T-cell (primary cell): ENCODE measurements at regions of chr2 and their contacts with region 1.

Region 1: GRCh38 chr2:104434966-104435365 is 418.9 kb upstream of the POU3F3 start:
- DNase-seq: no peak
- ATAC-seq: no peak
- H3K4me3 ChIP-seq: no peak overlapping the region
- H3K4me3 Mint-ChIP-seq: peak overlapping the region in 2 of 3 donors; percentile 36 to 71
- H3K27ac ChIP-seq: no peak overlapping the region
- H3K27ac Mint-ChIP-seq: no peak overlapping the region
- H3K4me1 ChIP-seq: no peaks in the 10 kb centered on the region
- H3K4me1 Mint-ChIP-seq: peaks cover 7% of the 10 kb centered on the region in 3 donors
- H3K27me3 ChIP-seq: no peaks in the 10 kb centered on the region
- H3K27me3 Mint-ChIP-seq: peaks cover 3 to 4% of the 10 kb centered on the region in 2 donors

Region 2: DNA sequence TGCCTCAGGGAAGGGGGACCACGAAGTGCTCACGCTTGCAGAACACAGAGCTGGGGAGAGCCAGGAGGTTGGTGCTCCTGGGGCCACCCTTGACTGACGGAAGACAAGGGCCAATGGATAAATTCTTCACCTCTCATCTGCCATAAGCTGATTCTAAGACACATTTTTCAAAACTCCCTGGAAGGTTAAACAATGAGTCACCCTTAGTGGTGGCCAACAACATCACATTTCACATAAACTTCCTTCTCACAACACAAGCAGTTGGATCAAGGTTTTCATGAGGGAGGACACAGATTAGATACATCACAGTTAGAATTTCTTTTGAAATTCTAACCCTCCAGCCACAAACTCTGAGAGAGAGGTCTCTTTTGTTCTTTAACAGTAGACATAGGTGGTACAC is 294.6 kb before region 1 on chr2:
- CTCF ChIA-PET with region 1: interaction called in 1 of 2 experiments, 12 read pairs
- POLR2A ChIA-PET with region 1: no interaction called
- DNase-seq: no peak
- ATAC-seq: no peak
- H3K4me3 ChIP-seq: no peak overlapping the region
- H3K4me3 Mint-ChIP-seq: no peak overlapping the region
- H3K27ac ChIP-seq: no peak overlapping the region
- H3K27ac Mint-ChIP-seq: no peak overlapping the region
- H3K4me1 ChIP-seq: no peaks in the 10 kb centered on the region
- H3K4me1 Mint-ChIP-seq: no peaks in the 10 kb centered on the region
- H3K27me3 ChIP-seq: no peaks in the 10 kb centered on the region
- H3K27me3 Mint-ChIP-seq: peaks cover 0 to 6% of the 10 kb centered on the region in 2 donors

Region 3: DNA sequence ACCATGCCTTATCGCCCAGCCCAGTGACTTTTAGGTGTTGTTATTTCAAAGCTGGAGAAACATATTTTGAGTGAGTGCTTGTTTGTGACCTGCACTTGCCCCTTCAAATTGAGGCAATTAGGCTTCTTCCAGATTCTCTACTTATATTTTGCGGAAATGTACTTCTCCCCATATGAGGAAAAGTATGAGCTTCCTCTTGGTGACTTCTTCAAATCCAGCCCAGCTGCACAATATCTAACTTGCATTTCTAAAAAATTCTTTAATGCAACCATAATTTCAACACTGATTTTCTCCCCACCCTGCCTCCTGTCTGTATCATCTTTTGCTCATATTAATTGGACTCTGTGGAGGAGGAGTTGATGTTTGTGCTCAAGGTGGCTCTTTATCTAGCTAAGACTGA is 27.8 kb after region 1 on chr2:
- CTCF ChIA-PET with region 1: no interaction called
- POLR2A ChIA-PET with region 1: no interaction called
- DNase-seq: no peak
- ATAC-seq: no peak
- H3K4me3 ChIP-seq: no peak overlapping the region
- H3K4me3 Mint-ChIP-seq: no peak overlapping the region
- H3K27ac ChIP-seq: no peak overlapping the region
- H3K27ac Mint-ChIP-seq: no peak overlapping the region
- H3K4me1 ChIP-seq: no peaks in the 10 kb centered on the region
- H3K4me1 Mint-ChIP-seq: no peaks in the 10 kb centered on the region
- H3K27me3 ChIP-seq: no peaks in the 10 kb centered on the region
- H3K27me3 Mint-ChIP-seq: peaks cover 5 to 13% of the 10 kb centered on the region in 2 donors